Endothelial cell of umbilical vein (primary cell): ENCODE measurements at regions of chr3 and their contacts with region 1.

Region 1: DNA sequence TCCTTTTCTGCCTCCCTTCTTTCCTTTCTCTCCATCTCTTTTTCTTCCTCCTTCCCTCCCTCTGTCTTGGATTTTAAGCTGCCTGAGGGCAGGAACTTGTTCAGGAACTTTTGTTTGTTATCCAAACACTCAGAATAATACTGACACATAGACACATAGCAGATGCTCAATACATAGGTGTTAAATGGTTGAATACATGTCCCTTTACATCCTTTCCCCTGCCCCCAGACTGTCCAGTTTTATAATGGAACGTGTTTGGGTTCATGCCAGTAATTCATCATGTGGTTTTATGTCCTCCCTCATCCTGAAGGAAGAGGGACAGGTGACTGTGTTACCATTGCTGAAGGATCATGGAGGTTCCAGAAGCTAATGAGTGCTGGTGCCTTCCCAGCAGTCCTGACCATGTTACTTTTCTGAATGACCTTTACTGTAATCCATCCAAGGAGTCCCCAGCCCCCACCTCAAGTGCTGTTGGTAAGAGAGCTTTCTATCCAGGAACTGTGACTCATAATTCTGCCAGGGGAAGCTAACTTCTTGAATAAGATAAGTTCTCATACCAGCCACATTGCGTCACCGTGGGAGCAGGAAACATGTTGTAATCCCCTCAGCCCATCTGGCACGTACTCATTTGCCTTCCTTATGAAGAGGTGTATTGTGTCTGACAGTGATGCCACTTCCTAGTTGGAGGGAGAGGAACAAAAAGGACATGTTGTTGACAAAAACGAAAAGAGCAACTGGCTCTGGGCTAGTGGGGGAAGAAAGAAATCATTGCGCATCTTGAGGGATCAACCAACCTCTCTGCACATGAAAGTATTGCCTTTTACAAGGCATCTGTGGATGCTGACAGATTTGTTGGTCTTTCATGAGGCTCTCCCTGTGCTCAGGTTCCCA is 52.4 kb downstream of the IL1RAP start:
- DNase-seq: peak; percentile 99
- H3K4me3 ChIP-seq: no peak overlapping the region
- H3K27ac ChIP-seq: peak overlapping the region; percentile 97
- H3K4me1 ChIP-seq: peaks cover 15% of the 10 kb centered on the region
- H3K27me3 ChIP-seq: no peaks in the 10 kb centered on the region
- CTCF ChIP-seq: no peak
- POLR2A ChIP-seq: no peak

Region 2: GRCh38 chr3:189908646-189909045 is 657.6 kb before region 1 on chr3:
- CTCF ChIA-PET with region 1: no interaction called
- POLR2A ChIA-PET with region 1: no interaction called
- dilution Hi-C with region 1: no loop called
- intact Hi-C with region 1: loop called (anchors 10 kb)
- DNase-seq: peak; percentile 87
- H3K4me3 ChIP-seq: no peak overlapping the region
- H3K27ac ChIP-seq: peak overlapping the region; percentile 90
- H3K4me1 ChIP-seq: peaks cover 31% of the 10 kb centered on the region
- H3K27me3 ChIP-seq: no peaks in the 10 kb centered on the region
- CTCF ChIP-seq: no peak
- POLR2A ChIP-seq: peak; percentile 9

Region 3: DNA sequence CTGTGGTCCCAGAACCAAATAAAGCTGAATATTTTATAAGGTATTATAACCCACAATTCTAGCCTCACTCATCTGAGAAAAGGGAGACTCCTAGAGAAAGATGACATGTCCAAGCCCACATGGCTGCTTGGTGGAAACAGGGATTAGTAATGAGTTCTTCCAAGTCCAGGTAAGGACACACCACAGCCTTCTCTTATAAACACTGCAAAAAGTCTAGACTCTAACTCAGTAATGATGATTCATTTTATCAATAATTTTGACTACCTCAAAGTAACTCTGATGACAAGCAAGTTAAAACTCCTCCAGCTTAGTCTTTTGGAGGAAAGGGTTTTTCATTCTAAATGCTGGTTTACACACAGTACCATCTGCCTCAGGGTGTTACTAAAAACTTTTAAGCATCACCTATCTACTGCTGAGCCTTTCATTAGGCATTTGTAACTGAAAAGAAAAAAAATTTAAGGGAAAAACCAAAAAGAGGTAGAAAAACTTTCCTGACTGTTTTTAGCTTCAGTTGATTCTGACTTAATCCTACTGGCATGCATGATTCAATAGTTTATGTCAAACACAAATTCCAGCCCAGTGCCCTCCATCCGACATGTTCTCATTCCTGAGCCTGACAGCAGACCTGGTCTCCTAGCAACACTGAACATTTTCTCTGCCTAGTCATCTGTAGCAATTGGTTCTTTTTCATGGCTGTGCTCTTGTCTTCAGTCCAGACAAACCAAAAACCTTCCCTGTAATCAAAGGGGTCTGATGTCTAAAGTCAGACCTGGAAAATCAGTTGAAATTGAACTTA is 489.5 kb before region 1 on chr3:
- CTCF ChIA-PET with region 1: no interaction called
- POLR2A ChIA-PET with region 1: no interaction called
- dilution Hi-C with region 1: no loop called
- intact Hi-C with region 1: loop called (anchors 2 kb)
- DNase-seq: peak; percentile 86
- H3K4me3 ChIP-seq: no peak overlapping the region
- H3K27ac ChIP-seq: peak overlapping the region; percentile 67
- H3K4me1 ChIP-seq: peaks cover 21% of the 10 kb centered on the region
- H3K27me3 ChIP-seq: no peaks in the 10 kb centered on the region
- CTCF ChIP-seq: no peak
- POLR2A ChIP-seq: no peak

Region 4: DNA sequence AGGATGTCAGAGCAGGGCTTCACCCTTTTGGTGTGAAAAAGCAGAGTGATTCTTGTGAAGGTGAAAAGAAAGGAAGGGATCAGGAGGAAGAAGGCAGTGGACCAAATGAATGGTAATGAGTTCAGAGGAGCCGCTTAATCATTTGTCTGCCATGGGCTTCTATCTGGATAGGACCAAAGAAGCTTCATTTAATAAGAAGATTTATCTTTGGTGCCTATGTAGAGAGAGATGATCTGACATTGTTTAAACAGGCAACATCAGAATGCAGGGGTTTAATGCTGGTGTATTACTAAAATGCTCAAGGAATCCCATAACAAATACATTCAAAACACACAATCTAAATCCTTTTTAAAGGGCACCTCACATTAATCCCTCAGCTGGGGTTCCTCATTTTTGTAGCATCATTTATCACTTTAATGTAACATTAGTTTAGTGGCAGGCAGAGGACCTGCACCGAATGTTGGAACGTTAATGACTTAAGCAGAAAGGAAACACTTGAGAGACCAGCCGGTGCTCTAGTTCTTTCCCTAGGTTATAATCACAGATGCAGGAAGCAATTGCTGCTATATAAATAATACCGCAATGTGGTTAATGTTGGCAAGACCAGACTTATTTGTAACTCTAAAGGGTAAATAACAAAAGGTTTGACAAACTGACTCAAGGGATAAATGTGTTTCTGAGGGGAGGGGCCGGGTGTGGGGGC is 80.3 kb before region 1 on chr3:
- CTCF ChIA-PET with region 1: no interaction called
- POLR2A ChIA-PET with region 1: no interaction called
- dilution Hi-C with region 1: no loop called
- intact Hi-C with region 1: no loop called
- DNase-seq: peak; percentile 81
- H3K4me3 ChIP-seq: no peak overlapping the region
- H3K27ac ChIP-seq: no peak overlapping the region
- H3K4me1 ChIP-seq: no peaks in the 10 kb centered on the region
- H3K27me3 ChIP-seq: peaks cover 41 to 64% of the 10 kb centered on the region in 2 experiments
- CTCF ChIP-seq: no peak
- POLR2A ChIP-seq: no peak

Region 5: GRCh38 chr3:190513409-190514162 is 52.7 kb before region 1 on chr3 and contains the start of gene IL1RAP:
- CTCF ChIA-PET with region 1: interaction called, 8 read pairs
- POLR2A ChIA-PET with region 1: no interaction called
- dilution Hi-C with region 1: no loop called
- intact Hi-C with region 1: loop called (anchors 1 kb)
- DNase-seq: peak; percentile 91
- H3K4me3 ChIP-seq: peak within 1 kb of the TSS; percentile 67 to 93 (median 87)
- H3K27ac ChIP-seq: peak within 1 kb of the TSS; percentile 45
- H3K4me1 ChIP-seq: peaks cover 6% of the 10 kb centered on the region
- H3K27me3 ChIP-seq: no peaks in the 10 kb centered on the region
- CTCF ChIP-seq: peak; percentile 48 to 77
- POLR2A ChIP-seq: no peak
- total RNA-seq, gene IL1RAP: 8.7 and 9.2 TPM in 2 replicates

Region 6: DNA sequence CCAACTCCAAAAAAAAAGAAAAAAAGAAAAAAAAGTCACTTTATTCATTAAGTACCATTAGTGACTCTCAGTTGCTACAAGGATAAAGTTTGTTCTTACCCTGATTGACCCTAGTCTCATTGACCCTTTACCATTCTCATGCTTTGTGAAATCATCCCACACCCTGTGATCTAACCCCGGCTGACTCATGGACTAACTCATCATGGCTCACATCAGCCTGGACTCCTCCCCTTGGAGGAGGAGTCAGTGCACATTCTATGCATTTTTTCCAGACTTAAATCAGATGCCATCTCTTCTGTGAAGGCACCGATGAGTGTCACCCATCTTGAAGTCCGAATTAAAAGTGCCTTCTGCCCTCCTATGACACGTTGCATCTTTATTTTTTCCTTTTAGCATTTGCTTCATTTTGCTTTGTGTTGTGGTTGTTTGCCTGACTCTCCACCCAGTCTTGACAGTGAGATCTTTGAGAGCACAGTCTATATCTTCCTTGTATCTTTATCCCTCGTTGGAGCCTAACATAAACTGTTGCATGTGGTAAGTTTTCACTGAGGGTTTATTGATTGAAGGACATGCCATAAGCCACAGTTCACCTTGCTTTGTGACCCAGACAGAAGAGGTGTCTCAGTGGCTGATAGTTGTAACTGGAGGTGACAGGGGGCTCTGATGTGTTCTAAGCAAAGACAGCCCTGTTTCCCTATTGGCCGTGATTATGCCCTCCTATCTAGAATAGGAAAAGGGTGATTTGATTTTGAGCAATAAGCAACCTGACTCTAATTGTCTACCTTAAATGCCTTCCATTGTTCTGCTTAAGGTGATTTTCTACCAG is 19.7 kb after region 1 on chr3:
- CTCF ChIA-PET with region 1: interaction called, 3 read pairs
- POLR2A ChIA-PET with region 1: no interaction called
- dilution Hi-C with region 1: no loop called
- intact Hi-C with region 1: loop called (anchors 1 kb)
- DNase-seq: peak; percentile 69
- H3K4me3 ChIP-seq: no peak overlapping the region
- H3K27ac ChIP-seq: peak overlapping the region; percentile 52
- H3K4me1 ChIP-seq: peaks cover 12% of the 10 kb centered on the region
- H3K27me3 ChIP-seq: no peaks in the 10 kb centered on the region
- CTCF ChIP-seq: no peak
- POLR2A ChIP-seq: no peak

Region 7: GRCh38 chr3:190830031-190830430 is 263.7 kb after region 1 on chr3:
- CTCF ChIA-PET with region 1: no interaction called
- POLR2A ChIA-PET with region 1: no interaction called
- dilution Hi-C with region 1: no loop called
- intact Hi-C with region 1: no loop called
- DNase-seq: no peak
- H3K4me3 ChIP-seq: no peak overlapping the region
- H3K27ac ChIP-seq: no peak overlapping the region
- H3K4me1 ChIP-seq: no peaks in the 10 kb centered on the region
- H3K27me3 ChIP-seq: no peaks in the 10 kb centered on the region
- CTCF ChIP-seq: no peak
- POLR2A ChIP-seq: no peak